ENCODE measurements at regions of chr9 and their contacts with region 1.

Region 1: GRCh38 chr9:83334320-83334719 is 203.9 kb downstream of the FRMD3 start:
- DNase-seq: peak; percentile 80
- H3K4me3 Mint-ChIP-seq: no peak overlapping the region
- H3K27ac Mint-ChIP-seq: no peak overlapping the region
- H3K4me1 Mint-ChIP-seq: peaks cover 14% of the 10 kb centered on the region
- H3K27me3 Mint-ChIP-seq: no peaks in the 10 kb centered on the region
- CTCF ChIP-seq: peak; percentile 67

Region 2: GRCh38 chr9:83219152-83219923 is 115.0 kb before region 1 on chr9:
- CTCF ChIA-PET with region 1: interaction called, 11 read pairs
- intact Hi-C with region 1: loop called (anchors 2 kb)
- DNase-seq: peak; percentile 83
- H3K4me3 Mint-ChIP-seq: peak overlapping the region; percentile 88
- H3K27ac Mint-ChIP-seq: peak overlapping the region; percentile 82
- H3K4me1 Mint-ChIP-seq: peaks cover 9% of the 10 kb centered on the region
- H3K27me3 Mint-ChIP-seq: no peaks in the 10 kb centered on the region
- CTCF ChIP-seq: peak; percentile 25

Region 3: GRCh38 chr9:83538172-83538889 is 204.0 kb after region 1 on chr9 and contains the start of gene FRMD3:
- CTCF ChIA-PET with region 1: interaction called, 47 read pairs
- intact Hi-C with region 1: no loop called
- DNase-seq: peak; percentile 86
- H3K4me3 Mint-ChIP-seq: peak within 1 kb of the TSS; percentile 73
- H3K27ac Mint-ChIP-seq: no peak within 1 kb of the TSS
- H3K4me1 Mint-ChIP-seq: no peaks in the 10 kb centered on the region
- H3K27me3 Mint-ChIP-seq: no peaks in the 10 kb centered on the region
- CTCF ChIP-seq: no peak
- total RNA-seq, gene FRMD3: 0.38 and 0.93 TPM in 2 replicates

Region 4: DNA sequence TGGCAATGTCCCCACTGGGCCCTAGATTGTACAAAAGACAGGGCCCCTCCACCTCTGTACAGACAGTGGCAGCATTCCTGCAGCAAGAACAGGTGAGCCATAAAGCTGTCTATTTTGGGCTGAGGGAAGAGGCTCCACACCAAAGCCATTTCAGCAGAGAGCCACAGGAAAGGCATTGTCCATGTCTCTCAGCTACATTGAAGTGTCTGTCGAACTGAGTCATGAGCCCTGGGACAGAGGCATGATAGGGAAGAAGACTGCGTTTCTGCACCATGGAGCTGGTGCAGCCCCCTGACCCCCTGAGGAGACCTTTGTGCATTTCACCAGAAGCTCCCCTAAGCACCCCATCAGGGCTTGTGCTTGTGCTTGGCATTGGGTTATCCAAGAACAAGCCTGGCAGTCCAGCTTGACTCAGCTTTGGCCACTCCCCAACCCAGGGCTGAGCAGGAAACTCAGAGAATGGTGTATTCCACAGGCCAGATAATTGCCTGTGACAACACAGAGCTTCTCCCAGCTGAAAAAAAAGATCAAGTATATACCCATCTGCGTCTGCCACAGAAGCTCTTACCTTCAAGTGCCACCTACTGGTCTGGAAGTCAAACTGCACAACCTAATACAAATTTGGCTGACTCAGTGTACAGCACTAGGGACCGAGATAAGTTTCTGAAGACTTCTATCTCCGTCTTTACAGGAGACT is 209.8 kb after region 1 on chr9:
- CTCF ChIA-PET with region 1: interaction called, 47 read pairs
- intact Hi-C with region 1: loop called (anchors 1 kb)
- DNase-seq: peak; percentile 13
- H3K4me3 Mint-ChIP-seq: no peak overlapping the region
- H3K27ac Mint-ChIP-seq: no peak overlapping the region
- H3K4me1 Mint-ChIP-seq: no peaks in the 10 kb centered on the region
- H3K27me3 Mint-ChIP-seq: no peaks in the 10 kb centered on the region
- CTCF ChIP-seq: peak; percentile 28

Measured in Calu3 (cell line).